Ovary (tissue), 10 donors: ENCODE measurements at regions of chr5 and their contacts with region 1.

Region 1: DNA sequence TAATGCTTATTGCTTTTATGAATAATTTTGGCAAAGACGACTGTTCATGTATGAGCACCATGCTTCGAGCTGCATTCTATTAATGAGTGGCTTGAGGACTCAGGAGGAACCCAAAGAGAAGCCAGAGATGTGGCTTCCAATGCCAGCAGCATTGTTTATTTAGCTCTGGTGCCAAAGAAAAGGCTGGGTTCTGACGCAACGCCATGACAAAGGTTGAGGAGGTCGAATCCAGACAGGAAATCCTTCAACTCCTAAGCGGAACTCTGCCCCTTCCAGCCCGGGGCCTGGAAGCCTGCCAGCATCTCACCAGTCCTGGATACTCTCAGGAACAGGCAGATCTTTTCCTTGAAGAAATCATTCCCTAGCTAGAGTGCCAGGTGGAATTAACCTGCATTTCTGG is 104.4 kb downstream of the ARHGAP26 start:
- DNase-seq: peak in 4 of 5 donors; percentile 32 to 64 (median 58)
- H3K4me3 ChIP-seq: no peak overlapping the region
- H3K27ac ChIP-seq: no peak overlapping the region
- H3K4me1 ChIP-seq: peaks cover 5% of the 10 kb centered on the region
- H3K27me3 ChIP-seq: no peaks in the 10 kb centered on the region
- CTCF ChIP-seq: no peak
- EP300 ChIP-seq: no peak
- POLR2A ChIP-seq: no peak

Region 2: GRCh38 chr5:142600611-142601358 is 273.8 kb before region 1 on chr5:
- intact Hi-C with region 1: loop called in 1 of 4 experiments (anchors 10 kb)
- DNase-seq: peak; percentile 24 to 54 (median 39)
- H3K4me3 ChIP-seq: peak overlapping the region; percentile 14
- H3K27ac ChIP-seq: no peak overlapping the region
- H3K4me1 ChIP-seq: peaks cover 3% of the 10 kb centered on the region
- H3K27me3 ChIP-seq: no peaks in the 10 kb centered on the region
- CTCF ChIP-seq: no peak
- EP300 ChIP-seq: no peak
- POLR2A ChIP-seq: no peak

Region 3: DNA sequence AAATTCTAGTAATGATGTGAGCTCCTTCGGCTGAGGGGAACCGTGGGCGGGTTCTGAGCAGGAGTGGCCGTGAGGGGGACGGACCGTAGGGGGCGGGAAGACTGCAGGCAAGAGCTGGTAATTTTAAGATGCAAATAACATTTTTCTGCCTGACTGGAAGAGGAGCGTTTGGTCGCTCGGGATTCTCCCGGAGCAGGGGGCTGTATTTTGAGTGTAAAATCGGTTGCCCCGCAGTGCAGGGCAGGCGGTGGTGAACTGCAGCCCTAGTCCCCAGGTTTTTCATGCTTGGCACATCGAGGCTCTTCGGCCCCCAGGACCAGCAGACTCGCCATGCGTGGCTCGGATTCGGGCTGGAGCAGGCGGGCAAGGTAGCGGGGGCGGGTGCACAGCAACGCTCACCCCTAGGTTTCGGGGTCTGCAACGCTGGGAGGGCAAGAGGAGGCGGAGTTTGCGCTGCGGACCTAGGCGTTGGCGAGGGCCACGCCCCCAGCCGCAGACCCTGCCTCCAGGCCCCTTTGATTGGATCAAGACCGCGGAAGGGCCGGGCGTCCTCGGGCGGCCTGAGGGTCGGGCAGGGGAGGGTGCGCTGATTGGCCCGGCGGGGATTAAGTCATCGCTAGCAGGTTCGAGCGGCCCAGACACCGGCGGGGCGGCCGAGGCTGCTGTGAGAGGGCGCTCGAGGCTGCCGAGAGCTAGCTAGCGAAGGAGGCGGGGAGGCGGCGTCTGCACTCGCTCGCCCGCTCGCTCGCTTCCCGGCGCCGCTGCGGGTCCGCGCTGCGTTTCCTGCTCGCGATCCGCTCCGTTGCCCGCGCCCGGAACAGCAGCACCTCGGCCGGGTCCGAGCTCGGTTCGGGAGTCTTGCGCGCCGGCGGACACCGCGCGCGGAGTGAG is 104.6 kb before region 1 on chr5 and contains the start of gene ARHGAP26:
- intact Hi-C with region 1: loop called in 1 of 4 experiments (anchors 5 kb)
- DNase-seq: peak; percentile 94 to 97 (median 95)
- H3K4me3 ChIP-seq: peak within 1 kb of the TSS; percentile 85
- H3K27ac ChIP-seq: peak within 1 kb of the TSS; percentile 26 to 75
- H3K4me1 ChIP-seq: no peaks in the 10 kb centered on the region
- H3K27me3 ChIP-seq: no peaks in the 10 kb centered on the region
- CTCF ChIP-seq: peak in 2 of 3 donors; percentile 22 to 35
- EP300 ChIP-seq: no peak
- POLR2A ChIP-seq: peak; percentile 99
- total RNA-seq, gene ARHGAP26: 7.1 to 47.1 (median 16.2) TPM

Region 4: GRCh38 chr5:142821733-142822487 is 52.6 kb before region 1 on chr5:
- intact Hi-C with region 1: no loop called
- DNase-seq: no peak
- H3K4me3 ChIP-seq: no peak overlapping the region
- H3K27ac ChIP-seq: no peak overlapping the region
- H3K4me1 ChIP-seq: peaks cover 2% of the 10 kb centered on the region
- H3K27me3 ChIP-seq: no peaks in the 10 kb centered on the region
- CTCF ChIP-seq: no peak
- EP300 ChIP-seq: no peak
- POLR2A ChIP-seq: no peak